WTC11 (cell line): ENCODE measurements at regions of chr5 and their contacts with region 1.

Region 1: GRCh38 chr5:15105796-15106393 is 234.3 kb upstream of the ANKH start:
- DNase-seq: peak; percentile 62
- ATAC-seq: peak; percentile 97
- H3K4me3 Mint-ChIP-seq: no peak overlapping the region
- H3K27ac Mint-ChIP-seq: no peak overlapping the region
- H3K4me1 Mint-ChIP-seq: peaks cover 9% of the 10 kb centered on the region
- H3K27me3 Mint-ChIP-seq: no peaks in the 10 kb centered on the region; the same call in 1 of the 2 replicates
- CTCF ChIP-seq: peak; percentile 69; the same call in 1 of the 2 replicates

Region 2: GRCh38 chr5:15092801-15093200 is 13.1 kb before region 1 on chr5:
- CTCF ChIA-PET with region 1: interaction called, 12 read pairs
- POLR2A ChIA-PET with region 1: no interaction called
- DNase-seq: no peak
- ATAC-seq: no peak
- H3K4me3 Mint-ChIP-seq: no peak overlapping the region
- H3K27ac Mint-ChIP-seq: no peak overlapping the region
- H3K4me1 Mint-ChIP-seq: no peaks in the 10 kb centered on the region
- H3K27me3 Mint-ChIP-seq: peaks cover 8% of the 10 kb centered on the region
- CTCF ChIP-seq: no peak

Region 3: DNA sequence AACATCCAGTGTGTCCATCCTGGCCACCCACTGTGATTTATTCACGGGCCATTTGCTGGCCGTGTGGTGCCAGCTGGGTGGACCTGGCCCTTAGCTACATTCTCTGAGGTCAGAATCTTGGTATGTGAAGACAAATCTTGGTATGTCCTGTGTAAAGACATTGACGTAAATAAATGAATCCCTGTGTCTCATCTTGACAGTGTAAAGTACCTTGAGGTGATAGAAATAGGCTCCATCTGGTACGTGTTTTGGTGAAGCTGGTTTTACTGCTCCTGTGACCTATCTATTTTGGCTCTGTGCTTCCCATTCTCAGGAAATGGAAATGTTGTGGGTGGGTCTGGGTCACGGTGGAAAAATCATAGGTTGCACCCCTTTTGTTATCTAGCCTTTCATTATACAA is 11.1 kb after region 1 on chr5:
- CTCF ChIA-PET with region 1: interaction called, 14 read pairs
- POLR2A ChIA-PET with region 1: no interaction called
- DNase-seq: no peak
- ATAC-seq: no peak
- H3K4me3 Mint-ChIP-seq: no peak overlapping the region
- H3K27ac Mint-ChIP-seq: no peak overlapping the region
- H3K4me1 Mint-ChIP-seq: 0 out of 2 replicates have a peak, but pooled peaks cover 3% of the 10 kb centered on the region
- H3K27me3 Mint-ChIP-seq: no peaks in the 10 kb centered on the region; the same call in 1 of the 2 replicates
- CTCF ChIP-seq: no peak

Region 4: GRCh38 chr5:15183522-15183921 is 77.6 kb after region 1 on chr5:
- CTCF ChIA-PET with region 1: interaction called, 53 read pairs
- POLR2A ChIA-PET with region 1: no interaction called
- DNase-seq: no peak
- ATAC-seq: 0 out of 2 replicates have a peak, but pooled peaks have one; percentile 32
- H3K4me3 Mint-ChIP-seq: no peak overlapping the region
- H3K27ac Mint-ChIP-seq: no peak overlapping the region
- H3K4me1 Mint-ChIP-seq: no peaks in the 10 kb centered on the region; the same call in 1 of the 2 replicates
- H3K27me3 Mint-ChIP-seq: no peaks in the 10 kb centered on the region
- CTCF ChIP-seq: no peak

Region 5: DNA sequence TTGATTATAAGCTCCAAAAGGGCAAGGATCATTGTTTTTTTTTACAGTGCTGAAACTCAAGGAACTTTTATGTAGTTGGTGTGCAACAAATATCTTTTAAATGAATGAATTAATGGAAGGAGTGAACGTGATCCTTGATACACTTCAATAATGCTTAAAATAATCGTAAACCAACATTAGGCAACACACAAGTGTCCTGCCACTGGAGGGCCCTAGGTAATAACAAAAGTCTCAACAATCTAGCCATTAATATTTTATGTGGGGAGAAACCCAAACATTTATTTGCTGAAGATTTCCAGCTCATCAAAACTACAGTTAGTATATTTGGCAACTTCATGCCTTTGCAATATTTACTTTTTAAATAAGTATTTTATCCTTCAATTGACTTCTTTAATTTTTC is 85.1 kb after region 1 on chr5:
- CTCF ChIA-PET with region 1: interaction called, 10 read pairs
- POLR2A ChIA-PET with region 1: no interaction called
- DNase-seq: no peak
- ATAC-seq: no peak
- H3K4me3 Mint-ChIP-seq: no peak overlapping the region
- H3K27ac Mint-ChIP-seq: no peak overlapping the region
- H3K4me1 Mint-ChIP-seq: no peaks in the 10 kb centered on the region
- H3K27me3 Mint-ChIP-seq: no peaks in the 10 kb centered on the region
- CTCF ChIP-seq: no peak